Gastrocnemius medialis (tissue), 4 donors: ENCODE measurements at regions of chr12 and their contacts with region 1.

Region 1: GRCh38 chr12:108562348-108563135 is at the start of gene ISCU:
- DNase-seq: peak; percentile 95 to 96
- ATAC-seq: peak; percentile 70 to 71
- H3K4me3 ChIP-seq: peak within 1 kb of the TSS; percentile 90 to 100 (median 94)
- H3K27ac ChIP-seq: peak within 1 kb of the TSS; percentile 92 to 97 (median 96)
- H3K4me1 ChIP-seq: peaks cover 55 to 56% of the 10 kb centered on the region in 2 donors
- H3K27me3 ChIP-seq: no peaks in the 10 kb centered on the region
- CTCF ChIP-seq: no peak
- POLR2A ChIP-seq: peak; percentile 96 to 98
- total RNA-seq, gene ISCU: 232 to 337 (median 249) TPM

Region 2: GRCh38 chr12:108618079-108618952 is 55.8 kb after region 1 on chr12:
- in situ Hi-C with region 1: loop called (anchors 5 kb)
- intact Hi-C with region 1: loop called (anchors 1 kb)
- DNase-seq: peak; percentile 58 to 69
- ATAC-seq: peak; percentile 81 to 88
- H3K4me3 ChIP-seq: no peak overlapping the region
- H3K27ac ChIP-seq: no peak overlapping the region
- H3K4me1 ChIP-seq: no peaks in the 10 kb centered on the region
- H3K27me3 ChIP-seq: no peaks in the 10 kb centered on the region
- CTCF ChIP-seq: peak; percentile 87 to 98 (median 95)
- POLR2A ChIP-seq: no peak

Region 3: GRCh38 chr12:108633534-108634248 is 71.1 kb after region 1 on chr12 and contains the start of gene SELPLG:
- in situ Hi-C with region 1: no loop called
- intact Hi-C with region 1: no loop called
- DNase-seq: peak; percentile 36 to 59
- ATAC-seq: peak in 1 of 2 donors; percentile 26
- H3K4me3 ChIP-seq: peak within 1 kb of the TSS in 1 of 4 donors; percentile 24
- H3K27ac ChIP-seq: peak within 1 kb of the TSS in 3 of 4 donors; percentile 31 to 48 (median 44)
- H3K4me1 ChIP-seq: peaks cover 12 to 14% of the 10 kb centered on the region in 2 donors
- H3K27me3 ChIP-seq: peaks cover 0 to 11% (median 0%) of the 10 kb centered on the region in 3 donors
- CTCF ChIP-seq: no peak
- POLR2A ChIP-seq: peak in 1 of 2 donors; percentile 10
- total RNA-seq, gene SELPLG: 0.19 to 5.0 (median 2.6) TPM

Region 4: DNA sequence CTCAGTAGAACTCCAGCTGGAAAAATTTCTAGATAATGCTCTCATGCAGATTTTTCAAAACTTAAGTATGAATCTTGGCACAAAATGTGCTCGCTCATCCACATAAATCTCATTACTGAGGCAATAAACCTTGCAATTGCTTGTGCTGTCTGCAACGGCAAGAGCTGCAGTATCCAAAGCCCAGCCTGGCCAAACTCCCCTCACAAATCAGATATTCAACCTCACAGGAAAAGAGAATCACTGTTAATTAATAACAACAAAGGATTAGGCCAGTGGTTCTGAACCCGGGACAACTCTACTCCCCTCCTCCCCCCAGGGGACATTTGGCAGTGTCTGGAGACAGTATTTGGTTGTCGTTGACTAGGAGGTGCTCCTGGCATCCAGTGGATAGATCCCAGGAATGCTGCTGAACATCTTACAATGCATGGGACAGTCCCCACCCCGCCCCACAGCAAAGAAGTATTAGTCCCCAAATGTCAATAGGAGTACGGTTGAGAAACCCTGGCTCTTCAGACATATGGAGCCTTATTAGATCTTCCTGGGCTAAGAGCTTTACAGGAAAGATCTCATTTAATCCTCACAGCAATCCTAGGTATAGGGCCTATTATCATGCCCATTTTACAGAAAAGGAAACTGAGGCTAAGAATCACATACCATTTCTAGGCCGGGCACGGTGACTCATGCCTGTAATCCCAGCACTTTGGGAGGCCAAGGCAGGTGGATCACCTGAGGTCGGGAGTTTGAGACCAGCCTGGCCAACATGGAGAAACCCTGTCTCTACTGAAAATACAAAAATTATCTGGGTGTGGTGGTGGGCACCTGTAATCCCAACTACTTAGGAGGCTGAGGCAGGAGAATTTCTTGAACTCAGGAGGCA is 188.2 kb after region 1 on chr12:
- in situ Hi-C with region 1: no loop called
- intact Hi-C with region 1: no loop called
- DNase-seq: no peak
- ATAC-seq: no peak
- H3K4me3 ChIP-seq: no peak overlapping the region
- H3K27ac ChIP-seq: no peak overlapping the region
- H3K4me1 ChIP-seq: peaks cover 0 to 3% of the 10 kb centered on the region in 2 donors
- H3K27me3 ChIP-seq: no peaks in the 10 kb centered on the region
- CTCF ChIP-seq: no peak
- POLR2A ChIP-seq: no peak

Region 5: GRCh38 chr12:108788076-108788782 is 225.7 kb after region 1 on chr12:
- in situ Hi-C with region 1: no loop called
- intact Hi-C with region 1: loop called (anchors 5 kb)
- DNase-seq: no peak
- ATAC-seq: no peak
- H3K4me3 ChIP-seq: no peak overlapping the region
- H3K27ac ChIP-seq: peak overlapping the region; percentile 77 to 92 (median 84)
- H3K4me1 ChIP-seq: peaks cover 54 to 61% of the 10 kb centered on the region in 2 donors
- H3K27me3 ChIP-seq: no peaks in the 10 kb centered on the region
- CTCF ChIP-seq: no peak
- POLR2A ChIP-seq: no peak

Region 6: GRCh38 chr12:108856428-108857157 is 294.1 kb after region 1 on chr12:
- in situ Hi-C with region 1: loop called in 1 of 4 experiments (anchors 10 kb)
- intact Hi-C with region 1: loop called (anchors 1 kb)
- DNase-seq: peak; percentile 70 to 91
- ATAC-seq: peak; percentile 28 to 39
- H3K4me3 ChIP-seq: peak overlapping the region; percentile 64 to 97 (median 86)
- H3K27ac ChIP-seq: peak overlapping the region; percentile 90 to 98 (median 96)
- H3K4me1 ChIP-seq: peaks cover 52 to 61% of the 10 kb centered on the region in 2 donors
- H3K27me3 ChIP-seq: no peaks in the 10 kb centered on the region
- CTCF ChIP-seq: no peak
- POLR2A ChIP-seq: peak; percentile 48 to 58

Region 7: GRCh38 chr12:109093022-109093918 is 530.7 kb after region 1 on chr12 and contains the start of gene ALKBH2:
- in situ Hi-C with region 1: loop called (anchors 10 to 25 kb)
- intact Hi-C with region 1: loop called (anchors 1 kb)
- DNase-seq: peak; percentile 89 to 92
- ATAC-seq: peak; percentile 69 to 72
- H3K4me3 ChIP-seq: peak within 1 kb of the TSS; percentile 61 to 93 (median 64)
- H3K27ac ChIP-seq: peak within 1 kb of the TSS; percentile 79 to 88 (median 81)
- H3K4me1 ChIP-seq: peaks cover 22 to 23% of the 10 kb centered on the region in 2 donors
- H3K27me3 ChIP-seq: no peaks in the 10 kb centered on the region
- CTCF ChIP-seq: peak; percentile 93 to 99 (median 97)
- POLR2A ChIP-seq: peak; percentile 52 to 77
- total RNA-seq, gene ALKBH2: 8.7 to 22.5 (median 18.2) TPM